ENCODE measurements at regions of chr16 and their contacts with region 1.

Region 1: GRCh38 chr16:87461466-87461991 is 31.3 kb downstream of the ZCCHC14 start:
- DNase-seq: peak; percentile 94
- ATAC-seq: peak; percentile 98 to 99
- H3K4me3 ChIP-seq: peak overlapping the region; percentile 40
- H3K27ac ChIP-seq: peak overlapping the region; percentile 72 to 86
- H3K4me1 ChIP-seq: peaks cover 40% of the 10 kb centered on the region
- CTCF ChIP-seq: peak; percentile 67
- EP300 ChIP-seq: no peak
- POLR2A ChIP-seq: 0 out of 2 replicates have a peak, but pooled peaks have one; percentile 11
- RAD21 ChIP-seq: peak; percentile 39 to 42; a peak in 3 of 5 replicates

Region 2: DNA sequence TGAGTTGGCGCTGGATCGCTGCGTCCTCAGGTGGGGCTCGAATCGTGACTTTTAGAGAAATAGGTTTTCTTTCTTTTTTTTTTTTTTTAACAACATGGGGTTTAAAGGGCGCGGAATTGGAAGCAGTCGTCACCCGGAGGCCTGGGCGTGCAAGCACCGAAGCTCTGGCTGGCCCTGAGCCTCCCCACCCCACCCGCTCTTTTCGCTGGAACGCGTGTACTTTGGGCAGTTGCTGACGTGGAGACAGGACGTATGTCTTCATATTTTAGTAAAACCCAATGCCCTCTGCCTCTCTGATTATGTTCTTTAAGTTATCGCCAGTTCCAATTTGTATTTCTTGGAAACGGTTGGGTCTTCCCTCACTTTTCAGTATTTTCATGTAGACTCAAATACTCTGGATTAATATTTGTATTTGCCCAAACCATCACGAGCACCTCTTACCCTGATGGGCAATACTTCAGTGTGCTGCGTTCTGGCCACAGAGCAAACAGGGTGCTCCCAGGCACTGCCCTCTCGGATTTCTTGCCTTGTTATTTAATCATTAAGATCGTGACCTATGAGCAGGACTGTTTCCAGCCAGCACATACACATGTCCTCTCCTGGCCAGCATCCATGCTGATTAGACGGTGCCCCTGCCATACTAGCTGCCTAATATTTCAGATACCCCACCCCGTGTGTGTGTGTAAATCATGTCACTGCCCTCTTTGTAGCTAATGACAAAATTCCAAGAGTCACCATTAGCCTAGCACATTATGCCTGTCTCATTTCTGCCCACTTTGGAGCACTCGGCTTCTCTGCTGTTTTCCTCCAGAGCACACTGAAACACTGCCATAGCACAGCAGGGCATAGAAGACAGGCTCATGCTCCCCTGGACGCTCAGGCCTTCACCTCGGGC is 143.5 kb before region 1 on chr16:
- CTCF ChIA-PET with region 1: no interaction called
- POLR2A ChIA-PET with region 1: no interaction called
- DNase-seq: peak; percentile 56 to 60
- ATAC-seq: peak in 1 of 2 experiments; percentile 65; a peak in 3 of 6 replicates
- H3K4me3 ChIP-seq: peak overlapping the region; percentile 69
- H3K27ac ChIP-seq: peak overlapping the region; percentile 89 to 94
- H3K4me1 ChIP-seq: peaks cover 6% of the 10 kb centered on the region; the same call in 2 of the 3 replicates
- CTCF ChIP-seq: no peak
- EP300 ChIP-seq: no peak
- POLR2A ChIP-seq: no peak
- RAD21 ChIP-seq: no peak

Region 3: DNA sequence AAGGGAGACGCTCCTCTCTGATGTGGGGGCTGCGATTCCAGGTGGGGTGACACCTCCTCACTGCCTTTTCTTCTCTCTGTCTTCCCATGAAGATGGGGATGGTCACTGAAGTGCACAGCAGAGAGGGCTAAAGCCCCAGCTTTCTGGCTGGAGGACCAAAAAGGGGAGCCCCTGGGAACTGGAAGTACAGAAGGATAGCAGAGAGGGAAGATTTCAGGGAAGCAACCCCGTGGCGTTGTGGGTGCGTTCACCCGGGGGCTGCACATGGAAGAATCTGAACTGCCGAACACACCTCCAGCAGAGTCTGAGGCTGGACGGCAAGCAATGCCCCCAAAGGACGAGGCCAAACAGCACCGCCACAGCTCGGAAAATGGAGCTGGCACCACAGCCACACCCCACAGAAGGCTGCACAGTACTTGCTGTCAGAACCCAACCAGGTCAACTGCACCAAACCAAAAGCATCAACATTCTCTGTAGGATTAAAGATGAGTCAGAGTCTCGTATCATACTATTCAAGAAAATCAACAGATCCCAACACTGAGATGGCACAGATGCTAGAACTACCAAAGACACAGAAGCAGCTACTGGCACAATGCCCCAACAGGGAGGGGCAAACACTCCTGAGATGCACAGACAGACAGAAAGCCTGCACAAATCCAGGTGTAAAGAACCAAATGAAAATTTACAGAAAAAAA is 19.5 kb before region 1 on chr16:
- CTCF ChIA-PET with region 1: interaction called, 11 read pairs
- POLR2A ChIA-PET with region 1: no interaction called
- DNase-seq: no peak
- ATAC-seq: no peak
- H3K4me3 ChIP-seq: no peak overlapping the region
- H3K27ac ChIP-seq: no peak overlapping the region
- H3K4me1 ChIP-seq: no peaks in the 10 kb centered on the region
- CTCF ChIP-seq: no peak
- EP300 ChIP-seq: no peak
- POLR2A ChIP-seq: no peak
- RAD21 ChIP-seq: no peak

Region 4: DNA sequence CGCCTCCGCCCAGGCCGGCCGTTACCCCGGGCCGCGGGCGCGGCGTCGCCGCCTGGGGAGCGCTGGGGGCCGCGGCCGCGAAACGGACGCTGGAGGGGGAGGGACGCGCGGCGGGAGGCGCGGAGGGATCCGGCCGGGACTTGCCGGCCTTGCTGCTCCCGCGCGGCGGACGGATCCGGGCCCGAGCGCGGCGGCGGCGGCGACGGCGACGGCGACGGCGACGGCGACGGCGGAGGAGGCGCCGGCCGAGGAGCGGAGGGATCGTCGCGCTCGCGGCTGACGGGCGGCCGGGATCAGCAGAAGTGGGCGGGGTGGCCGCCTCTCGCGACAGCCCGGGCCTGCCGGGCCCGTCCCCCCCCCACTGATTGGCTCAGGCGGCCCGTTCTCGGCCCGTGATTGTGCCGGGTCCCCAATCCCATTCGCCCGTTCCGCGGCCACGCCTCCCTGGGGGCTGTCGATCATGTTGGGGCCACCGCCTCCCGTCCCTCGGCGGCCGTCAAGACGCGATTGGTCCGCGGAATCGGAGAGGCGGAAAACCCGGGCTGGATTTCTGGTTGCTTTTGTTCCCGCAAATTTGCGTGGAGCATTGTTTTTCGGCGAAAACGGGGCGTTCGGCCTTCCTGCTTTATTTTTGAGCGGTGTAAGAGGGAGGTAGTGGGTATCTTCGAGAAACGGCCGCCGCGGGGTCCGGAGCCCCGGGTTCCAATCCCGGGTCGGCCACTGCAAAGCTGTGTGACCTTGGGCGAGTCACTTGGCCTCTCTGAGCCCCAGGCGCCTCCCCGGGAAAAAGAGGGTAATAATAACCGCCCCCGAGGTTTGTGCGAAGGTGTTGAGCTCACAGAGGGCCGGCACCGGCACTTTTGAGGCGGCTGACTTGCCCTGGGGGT is 31.4 kb after region 1 on chr16 and contains the start of gene ZCCHC14:
- CTCF ChIA-PET with region 1: interaction called, 5 read pairs
- POLR2A ChIA-PET with region 1: interaction called, 11 read pairs
- DNase-seq: peak; percentile 98
- ATAC-seq: peak; percentile 93 to 99
- H3K4me3 ChIP-seq: peak within 1 kb of the TSS; percentile 86
- H3K27ac ChIP-seq: peak within 1 kb of the TSS; percentile 89 to 98
- H3K4me1 ChIP-seq: peaks cover 26% of the 10 kb centered on the region
- CTCF ChIP-seq: no peak
- EP300 ChIP-seq: no peak
- POLR2A ChIP-seq: peak; percentile 70
- RAD21 ChIP-seq: no peak
- polyA plus RNA-seq, gene ZCCHC14: 3.8 and 5.5 TPM in 2 replicates

Measured in A549 (cell line).